Posterior cingulate gyrus (tissue), 11 donors: ENCODE measurements at regions of chr15 and their contacts with region 1.

Region 1: GRCh38 chr15:68492855-68493254 is 60.9 kb upstream of the ITGA11 start:
- DNase-seq: no peak

Region 2: DNA sequence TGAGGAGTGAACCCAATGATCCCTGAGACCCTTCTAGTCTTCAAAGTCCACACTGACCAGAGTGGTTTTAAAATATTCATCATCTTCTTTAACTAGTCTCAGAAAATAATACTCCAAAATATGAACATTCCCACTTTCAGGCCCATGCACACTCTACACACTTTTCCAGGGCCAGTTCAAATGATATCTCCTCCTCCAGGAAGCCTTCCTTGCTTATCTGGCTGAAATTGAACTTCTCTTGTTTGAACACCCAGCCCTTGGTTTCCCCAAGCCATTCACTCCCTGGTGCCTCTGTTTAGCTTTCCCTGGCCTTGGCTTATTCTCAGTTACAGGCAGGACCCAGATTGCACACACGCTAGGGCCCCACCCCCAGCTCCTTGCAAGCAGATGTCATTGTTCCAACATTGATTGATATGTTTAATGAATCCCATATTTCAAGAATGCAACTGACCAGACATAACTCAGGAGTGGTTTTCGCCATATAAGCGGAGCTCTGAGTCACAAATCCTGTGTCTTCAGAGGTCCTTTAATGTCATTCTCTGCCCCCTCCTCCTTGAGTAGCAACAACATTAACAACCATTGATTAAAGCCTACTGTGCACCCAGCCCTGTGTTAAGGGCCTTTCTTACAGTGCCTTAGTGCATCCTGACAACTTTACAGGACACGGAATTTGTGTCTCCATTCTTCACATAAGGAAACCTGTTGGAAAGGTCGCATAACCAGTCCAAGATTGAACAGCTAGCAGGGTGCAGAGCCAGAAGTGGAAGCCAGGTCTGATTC is 63.0 kb before region 1 on chr15:
- intact Hi-C with region 1: loop called (anchors 2 kb)
- DNase-seq: no peak

Region 3: DNA sequence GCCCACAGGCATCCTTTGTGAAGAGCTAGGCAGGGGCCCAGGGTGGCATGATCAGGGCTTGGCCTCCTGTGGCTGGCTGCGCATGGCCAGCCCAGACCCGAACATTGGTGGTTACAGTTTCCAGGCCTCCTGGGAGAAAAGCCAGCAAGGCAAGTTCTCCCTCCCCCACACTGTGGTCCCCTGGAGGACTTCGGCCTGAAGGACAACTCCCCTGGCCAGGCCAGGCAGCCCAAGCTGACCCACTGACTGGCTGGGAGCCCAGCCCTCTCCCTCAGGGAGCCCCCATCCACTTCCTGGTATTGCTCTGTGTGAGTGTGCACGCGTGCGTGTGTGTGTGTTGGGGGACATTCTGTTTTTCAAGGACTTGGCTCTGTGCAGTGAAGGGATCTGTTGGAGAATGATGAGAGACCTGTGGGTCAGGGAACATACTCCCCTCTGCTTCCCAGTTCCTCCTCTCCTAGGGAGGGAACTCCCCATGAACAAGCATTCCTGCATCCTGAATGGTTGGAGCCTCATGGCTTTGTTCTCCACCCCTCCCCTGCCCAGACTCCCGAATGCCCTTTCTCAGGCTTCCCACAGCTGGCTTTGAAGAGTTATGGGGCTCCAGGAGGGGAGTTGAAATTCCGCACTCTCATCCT is 115.5 kb after region 1 on chr15:
- intact Hi-C with region 1: no loop called
- DNase-seq: peak in 5 of 10 donors; percentile 55 to 92 (median 60)

Region 4: DNA sequence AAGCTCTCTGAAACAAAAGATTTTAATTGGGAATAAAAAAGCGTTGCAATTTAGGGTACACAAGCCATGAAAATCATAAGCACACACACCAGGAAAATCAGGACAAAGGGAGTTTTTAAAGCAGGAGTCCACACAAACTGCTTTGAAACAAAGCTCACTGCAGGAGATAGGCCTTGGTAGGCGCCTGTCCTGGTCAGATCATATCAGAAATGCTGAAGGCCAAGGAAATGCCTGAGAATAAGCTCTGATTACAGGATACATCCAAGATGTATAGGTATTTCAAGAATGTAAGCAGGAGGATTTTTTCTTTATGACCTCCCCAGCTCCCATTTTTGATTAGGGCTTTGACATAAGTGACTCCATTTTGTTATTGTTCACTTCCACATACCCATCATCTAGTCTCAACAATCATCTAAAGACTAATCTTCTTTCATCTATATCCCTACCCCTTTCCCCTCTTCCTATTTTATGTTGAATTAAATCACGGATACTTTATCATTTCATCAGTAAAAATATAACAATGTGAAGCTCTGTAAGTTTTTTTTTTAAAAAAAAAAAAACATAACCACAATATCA is 456.2 kb after region 1 on chr15:
- intact Hi-C with region 1: no loop called
- DNase-seq: no peak